ENCODE measurements at regions of chr11 and their contacts with region 1.

Region 1: GRCh38 chr11:27472398-27473016 is at the start of gene LGR4:
- DNase-seq: peak; percentile 89 to 94
- ATAC-seq: peak; percentile 95 to 98 (median 96)
- H3K4me3 ChIP-seq: peak within 1 kb of the TSS; percentile 64 to 97 (median 82)
- H3K27ac ChIP-seq: peak within 1 kb of the TSS; percentile 82 to 97 (median 90)
- H3K4me1 ChIP-seq: peaks cover 0 to 46% (median 19%) of the 10 kb centered on the region in 9 donors
- H3K27me3 ChIP-seq: peaks cover 0 to 10% (median 0%) of the 10 kb centered on the region in 7 donors
- CTCF ChIP-seq: no peak
- total RNA-seq, gene LGR4: 13.6 to 41.0 (median 23.3) TPM

Region 2: DNA sequence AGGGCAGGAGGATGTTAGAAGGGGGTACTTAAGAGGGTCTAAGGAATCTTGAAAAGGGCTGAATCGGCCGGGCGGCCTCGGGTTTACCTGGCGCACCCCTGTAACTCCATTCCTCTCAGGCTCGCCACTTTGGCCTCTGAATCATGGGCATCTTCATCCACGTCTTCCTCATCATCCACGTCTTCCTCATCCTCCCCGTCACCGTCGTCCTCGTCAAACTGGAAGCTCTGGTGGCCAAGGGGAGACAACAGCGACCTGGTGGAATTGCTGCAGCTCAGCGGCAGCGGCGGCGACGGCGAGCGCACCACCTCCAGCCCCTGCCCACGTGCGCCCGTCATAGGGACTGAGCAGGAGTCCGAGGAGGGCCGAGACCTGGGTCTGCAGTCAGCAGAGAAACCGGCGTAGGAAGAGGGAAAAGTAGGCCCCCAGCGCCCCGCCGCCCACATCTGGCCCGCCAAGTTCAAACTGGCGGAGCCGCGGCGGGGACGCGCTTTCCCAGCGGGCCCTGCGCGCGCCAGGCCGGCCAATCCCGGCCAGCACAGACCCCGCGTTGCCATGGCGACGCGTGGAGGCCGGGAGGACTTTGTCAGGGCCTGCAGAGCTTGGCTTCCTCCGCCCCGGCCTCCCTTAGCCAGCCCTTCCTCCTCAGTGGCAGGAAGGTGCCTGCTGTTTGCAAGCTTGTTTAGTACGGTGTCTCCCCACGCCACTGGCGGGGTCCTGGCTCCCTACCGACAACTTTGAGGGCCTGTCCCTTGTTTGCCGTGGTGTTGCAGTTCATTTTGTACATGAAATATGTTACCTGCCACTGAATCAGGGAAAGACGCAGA is 109.5 kb before region 1 on chr11 and contains the start of gene CCDC34:
- intact Hi-C with region 1: loop called in 4 of 10 experiments (anchors 10 kb)
- DNase-seq: peak; percentile 88 to 93
- ATAC-seq: peak; percentile 99 to 100 (median 100)
- H3K4me3 ChIP-seq: peak within 1 kb of the TSS; percentile 51 to 93 (median 75)
- H3K27ac ChIP-seq: peak within 1 kb of the TSS in 7 of 10 donors; percentile 3 to 76 (median 34)
- H3K4me1 ChIP-seq: peaks cover 0 to 24% (median 12%) of the 10 kb centered on the region in 9 donors
- H3K27me3 ChIP-seq: no peaks in the 10 kb centered on the region
- CTCF ChIP-seq: peak in 1 of 9 donors; percentile 20
- total RNA-seq, gene CCDC34: 1.1 to 10.7 (median 3.3) TPM

Region 3: DNA sequence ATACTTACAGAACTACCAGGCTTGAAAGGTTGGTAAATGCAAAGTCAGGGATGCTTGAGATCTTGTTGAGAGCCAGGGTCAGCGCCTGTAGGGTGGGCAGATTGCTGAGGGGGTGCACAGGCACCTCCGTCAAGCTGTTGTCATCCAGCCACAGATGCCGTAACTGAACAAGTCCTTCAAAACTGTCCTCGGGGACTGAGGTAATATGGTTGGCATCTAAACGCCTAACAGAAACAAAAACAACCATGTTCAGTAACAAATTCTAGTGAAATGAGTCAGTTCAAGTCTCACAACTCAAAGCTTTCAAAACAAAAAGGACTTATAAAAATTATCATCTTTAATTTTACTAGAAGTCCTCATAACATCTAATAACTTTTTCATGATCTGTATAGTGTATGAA is 87.3 kb before region 1 on chr11:
- intact Hi-C with region 1: loop called in 2 of 10 experiments (anchors 10 kb)
- DNase-seq: no peak
- ATAC-seq: peak in 5 of 8 donors; percentile 34 to 82 (median 62)
- H3K4me3 ChIP-seq: no peak overlapping the region
- H3K27ac ChIP-seq: peak overlapping the region in 2 of 10 donors; percentile 1 to 18
- H3K4me1 ChIP-seq: peaks cover 0 to 26% (median 0%) of the 10 kb centered on the region in 9 donors
- H3K27me3 ChIP-seq: no peaks in the 10 kb centered on the region
- CTCF ChIP-seq: no peak

Region 4: GRCh38 chr11:27392278-27393114 is 80.0 kb before region 1 on chr11:
- intact Hi-C with region 1: loop called in 3 of 10 experiments (anchors 5 to 10 kb)
- DNase-seq: no peak
- ATAC-seq: peak in 6 of 8 donors; percentile 47 to 72 (median 64)
- H3K4me3 ChIP-seq: no peak overlapping the region
- H3K27ac ChIP-seq: peak overlapping the region in 8 of 10 donors; percentile 2 to 60 (median 24)
- H3K4me1 ChIP-seq: peaks cover 0 to 50% (median 36%) of the 10 kb centered on the region in 9 donors
- H3K27me3 ChIP-seq: no peaks in the 10 kb centered on the region
- CTCF ChIP-seq: no peak

Region 5: DNA sequence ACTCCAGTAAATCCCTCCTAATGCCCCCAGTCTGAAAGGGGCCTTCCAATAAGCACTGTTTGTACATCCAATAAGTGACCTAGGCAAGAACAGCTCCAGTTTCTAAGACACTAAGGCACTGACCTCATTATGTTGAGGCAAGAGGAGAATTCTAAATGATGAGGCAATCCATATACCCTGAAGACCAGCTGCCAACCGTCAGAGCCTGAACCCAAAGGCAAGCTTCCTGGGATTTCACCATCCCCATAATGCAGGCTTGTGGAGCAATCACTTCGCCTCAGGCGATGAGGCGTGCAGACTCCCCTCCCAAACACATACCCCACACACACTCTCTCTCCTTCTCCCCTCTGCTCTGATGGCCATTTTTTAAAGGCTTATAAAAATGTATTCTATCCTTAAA is 49.4 kb before region 1 on chr11:
- intact Hi-C with region 1: loop called in 1 of 10 experiments (anchors 5 kb)
- DNase-seq: peak; percentile 9 to 25
- ATAC-seq: peak; percentile 49 to 92 (median 74)
- H3K4me3 ChIP-seq: no peak overlapping the region
- H3K27ac ChIP-seq: peak overlapping the region in 8 of 10 donors; percentile 13 to 72 (median 58)
- H3K4me1 ChIP-seq: peaks cover 0 to 40% (median 27%) of the 10 kb centered on the region in 9 donors
- H3K27me3 ChIP-seq: no peaks in the 10 kb centered on the region
- CTCF ChIP-seq: no peak

Region 6: GRCh38 chr11:27663294-27663693 is 190.8 kb after region 1 on chr11:
- intact Hi-C with region 1: no loop called
- DNase-seq: no peak
- ATAC-seq: no peak
- H3K4me3 ChIP-seq: no peak overlapping the region
- H3K27ac ChIP-seq: no peak overlapping the region
- H3K4me1 ChIP-seq: peaks cover 0 to 6% (median 0%) of the 10 kb centered on the region in 9 donors
- H3K27me3 ChIP-seq: no peaks in the 10 kb centered on the region
- CTCF ChIP-seq: no peak